ENCODE measurements at regions of chr7 and their contacts with region 1.

Region 1: DNA sequence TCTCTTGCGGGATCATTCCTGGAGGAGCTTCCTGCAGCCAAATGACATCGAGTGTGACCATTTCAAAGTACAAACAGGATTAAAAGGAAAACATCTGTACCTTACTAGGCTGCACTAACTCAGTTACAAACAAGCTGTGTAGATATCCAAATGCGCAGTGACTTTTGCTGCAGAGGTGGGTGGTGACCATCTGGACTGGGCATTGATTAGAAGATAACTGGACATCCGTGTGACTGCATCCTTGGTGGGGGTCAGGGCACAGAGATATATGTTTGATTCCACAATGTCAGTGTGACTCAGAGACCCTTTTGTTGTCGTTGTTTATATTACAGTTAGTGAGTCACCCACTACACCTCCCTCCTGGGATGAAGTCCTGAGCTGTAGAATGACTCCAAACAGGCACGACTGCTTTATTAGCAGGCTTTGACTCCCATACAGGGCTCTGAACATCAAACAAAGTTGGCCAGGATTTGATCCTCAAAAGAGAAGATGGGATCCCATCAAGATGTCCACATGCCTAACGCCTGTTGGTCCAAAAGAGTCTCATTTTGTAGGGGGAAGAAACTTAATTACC is 56.7 kb upstream of the SDK1 start:
- DNase-seq: peak; percentile 68
- H3K4me3 ChIP-seq: no peak overlapping the region
- H3K27ac ChIP-seq: peak overlapping the region; percentile 82
- H3K27me3 ChIP-seq: no peaks in the 10 kb centered on the region
- CTCF ChIP-seq: no peak

Region 2: GRCh38 chr7:2248984-2249694 is 995.2 kb before region 1 on chr7:
- CTCF ChIA-PET with region 1: no interaction called
- POLR2A ChIA-PET with region 1: no interaction called
- DNase-seq: peak; percentile 89
- H3K4me3 ChIP-seq: no peak overlapping the region; the same call in 1 of the 2 replicates
- H3K27ac ChIP-seq: peak overlapping the region; percentile 99
- H3K27me3 ChIP-seq: no peaks in the 10 kb centered on the region
- CTCF ChIP-seq: no peak

Region 3: GRCh38 chr7:3267966-3268690 is 23.8 kb after region 1 on chr7:
- CTCF ChIA-PET with region 1: no interaction called
- POLR2A ChIA-PET with region 1: interaction called, 15 read pairs
- DNase-seq: peak; percentile 97
- H3K4me3 ChIP-seq: no peak overlapping the region
- H3K27ac ChIP-seq: peak overlapping the region; percentile 91
- H3K27me3 ChIP-seq: peaks cover 16% of the 10 kb centered on the region
- CTCF ChIP-seq: no peak

Measured in AG04450 (cell line).